ENCODE measurements at regions of chrX and their contacts with region 1.

Region 1: DNA sequence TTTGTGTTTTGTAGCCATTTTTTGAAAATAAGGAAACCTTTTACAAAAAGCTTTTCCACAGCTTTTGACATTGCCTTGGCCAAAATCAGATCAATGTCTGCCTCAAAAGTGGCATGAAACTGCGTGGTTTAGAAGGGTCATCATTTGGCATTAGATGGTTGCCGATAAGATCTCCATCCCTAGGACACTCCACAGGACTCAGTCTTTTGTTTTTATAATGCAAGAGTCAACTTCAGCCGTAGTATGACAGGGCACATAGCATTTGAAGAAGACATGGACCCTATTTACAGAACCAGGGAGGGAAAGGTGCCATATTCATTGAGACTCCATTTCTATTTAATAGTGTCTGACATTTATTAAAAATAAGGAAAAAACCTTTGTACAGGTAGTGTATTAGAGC is 1.3 kb downstream of the RTL8A start:
- DNase-seq: no peak
- ATAC-seq: no peak
- H3K4me3 ChIP-seq: no peak overlapping the region
- H3K4me3 Mint-ChIP-seq: peak overlapping the region; percentile 93
- H3K27ac ChIP-seq: no peak overlapping the region
- H3K27ac Mint-ChIP-seq: no peak overlapping the region
- H3K4me1 ChIP-seq: peaks cover 4 to 17% of the 10 kb centered on the region in 2 donors
- H3K4me1 Mint-ChIP-seq: peaks cover 18% of the 10 kb centered on the region
- H3K27me3 ChIP-seq: no peaks in the 10 kb centered on the region
- H3K27me3 Mint-ChIP-seq: no peaks in the 10 kb centered on the region
- CTCF ChIP-seq: no peak

Region 2: DNA sequence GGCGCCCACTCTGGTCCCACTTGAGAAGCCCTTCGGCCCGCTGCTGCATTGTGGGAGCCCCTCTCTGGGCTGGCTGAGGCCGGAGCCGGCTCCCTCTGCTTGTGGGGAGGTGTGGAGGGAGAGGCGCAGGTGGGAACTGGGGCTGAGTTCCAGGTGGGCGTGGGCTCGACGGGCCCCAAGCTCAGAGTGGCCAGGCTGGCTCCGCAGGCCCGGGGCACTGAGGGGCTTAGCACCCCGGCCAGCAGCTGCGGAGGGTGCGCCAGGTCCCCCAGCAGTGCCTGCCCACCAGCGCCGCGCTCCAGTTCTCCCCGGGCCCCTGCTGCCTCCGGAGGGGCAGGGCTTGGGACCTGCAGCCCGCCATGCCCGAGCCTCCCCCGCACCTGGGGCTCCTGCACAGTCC is 125.1 kb before region 1 on chrX:
- CTCF ChIA-PET with region 1: no interaction called
- POLR2A ChIA-PET with region 1: no interaction called
- intact Hi-C with region 1: no loop called
- DNase-seq: no peak
- ATAC-seq: no peak
- H3K4me3 ChIP-seq: no peak overlapping the region
- H3K4me3 Mint-ChIP-seq: no peak overlapping the region
- H3K27ac ChIP-seq: no peak overlapping the region
- H3K27ac Mint-ChIP-seq: no peak overlapping the region
- H3K4me1 ChIP-seq: no peaks in the 10 kb centered on the region
- H3K4me1 Mint-ChIP-seq: no peaks in the 10 kb centered on the region
- H3K27me3 ChIP-seq: no peaks in the 10 kb centered on the region
- H3K27me3 Mint-ChIP-seq: peaks cover 10% of the 10 kb centered on the region
- CTCF ChIP-seq: no peak

Region 3: GRCh38 chrX:134936542-134936941 is 114.1 kb before region 1 on chrX:
- CTCF ChIA-PET with region 1: no interaction called
- POLR2A ChIA-PET with region 1: no interaction called
- intact Hi-C with region 1: no loop called
- DNase-seq: no peak
- ATAC-seq: no peak
- H3K4me3 ChIP-seq: no peak overlapping the region
- H3K4me3 Mint-ChIP-seq: no peak overlapping the region
- H3K27ac ChIP-seq: no peak overlapping the region
- H3K27ac Mint-ChIP-seq: no peak overlapping the region
- H3K4me1 ChIP-seq: no peaks in the 10 kb centered on the region
- H3K4me1 Mint-ChIP-seq: no peaks in the 10 kb centered on the region
- H3K27me3 ChIP-seq: no peaks in the 10 kb centered on the region
- H3K27me3 Mint-ChIP-seq: no peaks in the 10 kb centered on the region
- CTCF ChIP-seq: no peak

Region 4: GRCh38 chrX:135003876-135004623 is 46.6 kb before region 1 on chrX:
- CTCF ChIA-PET with region 1: no interaction called
- POLR2A ChIA-PET with region 1: no interaction called
- intact Hi-C with region 1: loop called (anchors 1 kb)
- DNase-seq: peak; percentile 86
- ATAC-seq: peak; percentile 98
- H3K4me3 ChIP-seq: peak overlapping the region; percentile 25 to 56 (median 47)
- H3K4me3 Mint-ChIP-seq: peak overlapping the region; percentile 91
- H3K27ac ChIP-seq: no peak overlapping the region
- H3K27ac Mint-ChIP-seq: peak overlapping the region; percentile 39
- H3K4me1 ChIP-seq: peaks cover 8 to 9% of the 10 kb centered on the region in 2 donors
- H3K4me1 Mint-ChIP-seq: peaks cover 10% of the 10 kb centered on the region
- H3K27me3 ChIP-seq: peaks cover 0 to 2% (median 0%) of the 10 kb centered on the region in 4 experiments
- H3K27me3 Mint-ChIP-seq: no peaks in the 10 kb centered on the region
- CTCF ChIP-seq: no peak

Region 5: DNA sequence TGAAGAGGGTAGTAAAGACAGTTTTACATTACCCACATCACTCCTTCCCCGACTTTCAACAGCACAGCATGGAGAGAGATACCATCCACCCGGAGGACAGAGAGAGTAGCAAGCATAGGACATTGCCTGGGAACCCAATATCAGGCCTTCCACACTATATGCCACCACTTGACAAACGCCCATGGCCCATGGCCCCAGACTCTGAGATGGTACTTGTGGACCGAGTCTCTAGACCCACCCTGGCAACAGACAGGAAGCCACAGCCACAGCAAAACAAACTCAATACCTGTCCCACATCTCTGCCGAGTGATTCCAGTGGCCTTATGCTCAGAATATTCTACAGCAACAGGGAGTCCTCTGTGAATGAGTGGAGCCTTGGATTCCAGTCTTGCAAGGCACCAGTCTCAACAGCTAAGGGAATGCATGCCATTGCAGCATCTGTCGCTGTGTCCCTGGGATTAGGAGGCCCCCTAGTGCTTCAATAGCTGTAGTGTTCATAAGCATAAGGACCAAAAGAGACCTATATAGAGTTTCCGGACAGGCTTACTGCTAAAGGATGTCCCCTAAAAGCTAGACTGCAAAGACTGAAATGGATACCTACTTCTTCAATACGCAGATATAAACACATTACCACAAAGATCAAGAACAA is 135.3 kb after region 1 on chrX:
- CTCF ChIA-PET with region 1: no interaction called
- POLR2A ChIA-PET with region 1: no interaction called
- intact Hi-C with region 1: no loop called
- DNase-seq: peak; percentile 42
- ATAC-seq: peak; percentile 36
- H3K4me3 ChIP-seq: no peak overlapping the region
- H3K4me3 Mint-ChIP-seq: no peak overlapping the region
- H3K27ac ChIP-seq: no peak overlapping the region
- H3K27ac Mint-ChIP-seq: no peak overlapping the region
- H3K4me1 ChIP-seq: no peaks in the 10 kb centered on the region
- H3K4me1 Mint-ChIP-seq: no peaks in the 10 kb centered on the region
- H3K27me3 ChIP-seq: peaks cover 0 to 4% (median 2%) of the 10 kb centered on the region in 4 experiments
- H3K27me3 Mint-ChIP-seq: peaks cover 19% of the 10 kb centered on the region
- CTCF ChIP-seq: peak; percentile 45